IMR-90 (cell line): ENCODE measurements at regions of chr18 and their contacts with region 1.

Region 1: GRCh38 chr18:21218630-21219261 is 23.3 kb upstream of the GREB1L start:
- DNase-seq: no peak
- ATAC-seq: no peak
- H3K4me3 ChIP-seq: no peak overlapping the region
- H3K27ac ChIP-seq: no peak overlapping the region
- H3K4me1 ChIP-seq: no peaks in the 10 kb centered on the region
- H3K27me3 ChIP-seq: peaks cover 5% of the 10 kb centered on the region; the same call in 1 of the 2 replicates
- CTCF ChIP-seq: no peak
- POLR2A ChIP-seq: no peak
- RAD21 ChIP-seq: no peak

Region 2: GRCh38 chr18:21099442-21099841 is 119.3 kb before region 1 on chr18:
- CTCF ChIA-PET with region 1: interaction called, 5 read pairs
- POLR2A ChIA-PET with region 1: no interaction called
- dilution Hi-C with region 1: no loop called
- in situ Hi-C with region 1: no loop called
- intact Hi-C with region 1: loop called (anchors 10 kb)
- DNase-seq: no peak
- ATAC-seq: no peak
- H3K4me3 ChIP-seq: no peak overlapping the region
- H3K27ac ChIP-seq: no peak overlapping the region
- H3K4me1 ChIP-seq: 0 out of 2 replicates have a peak, but pooled peaks cover 2% of the 10 kb centered on the region
- H3K27me3 ChIP-seq: no peaks in the 10 kb centered on the region
- CTCF ChIP-seq: no peak
- POLR2A ChIP-seq: no peak
- RAD21 ChIP-seq: no peak

Region 3: GRCh38 chr18:21933931-21934765 is 715.4 kb after region 1 on chr18:
- CTCF ChIA-PET with region 1: no interaction called
- POLR2A ChIA-PET with region 1: no interaction called
- dilution Hi-C with region 1: no loop called
- in situ Hi-C with region 1: loop called (anchors 25 kb)
- intact Hi-C with region 1: no loop called
- DNase-seq: no peak
- ATAC-seq: no peak
- H3K4me3 ChIP-seq: no peak overlapping the region
- H3K27ac ChIP-seq: no peak overlapping the region
- H3K4me1 ChIP-seq: no peaks in the 10 kb centered on the region
- H3K27me3 ChIP-seq: peaks cover 40% of the 10 kb centered on the region
- CTCF ChIP-seq: no peak
- POLR2A ChIP-seq: no peak
- RAD21 ChIP-seq: no peak